ENCODE measurements at regions of chr4 and their contacts with region 1.

Region 1: DNA sequence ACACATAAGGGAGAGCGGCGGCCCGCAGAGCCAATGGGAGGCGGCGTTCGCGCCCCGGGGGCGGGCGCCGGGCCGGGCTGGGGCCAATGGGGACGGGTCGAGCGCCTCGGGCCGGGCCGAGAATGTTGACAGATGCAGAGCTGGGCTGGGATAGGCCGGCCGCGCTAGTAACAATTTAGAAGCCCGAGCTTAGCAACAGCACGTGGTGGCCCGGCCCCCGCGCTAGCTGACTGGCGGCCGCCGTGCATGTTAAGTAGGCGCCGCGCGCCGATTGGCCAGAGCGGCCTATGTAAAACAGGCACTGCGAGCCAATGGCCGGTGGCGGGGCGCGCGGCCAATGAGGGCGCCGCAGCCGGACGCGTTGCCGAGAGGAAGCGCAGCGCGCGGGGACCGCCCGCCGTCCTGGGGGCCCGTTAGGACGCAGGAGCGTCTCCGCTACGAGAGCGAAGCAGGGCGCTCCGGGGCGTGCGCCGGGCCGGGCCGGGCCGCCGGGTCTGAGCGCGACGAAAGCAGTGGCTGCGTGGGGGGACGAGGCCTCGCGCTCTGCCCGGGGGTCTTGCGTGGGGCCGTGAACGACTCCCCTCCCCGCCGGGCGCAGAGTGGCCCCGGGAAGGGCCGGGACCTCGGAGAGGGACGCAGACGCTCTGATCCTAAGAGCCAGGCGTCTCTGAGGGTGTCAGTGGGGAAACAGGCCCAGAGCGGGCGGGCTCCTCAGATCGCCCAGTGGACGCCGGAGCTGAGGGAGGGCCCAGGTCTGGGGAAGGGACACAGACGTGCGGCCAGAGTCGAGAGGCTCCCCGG is 434 bp upstream of the MXD4 start:
- DNase-seq: peak; percentile 95 to 99 (median 98)
- ATAC-seq: peak; percentile 93
- H3K4me3 ChIP-seq: peak overlapping the region; percentile 69
- H3K4me3 Mint-ChIP-seq: peak overlapping the region; percentile 61 to 85 (median 76)
- H3K27ac ChIP-seq: peak overlapping the region; percentile 95
- H3K27ac Mint-ChIP-seq: peak overlapping the region; percentile 61 to 87 (median 83)
- H3K4me1 ChIP-seq: peaks cover 8 to 23% of the 10 kb centered on the region in 2 donors
- H3K4me1 Mint-ChIP-seq: peaks cover 0 to 11% (median 0%) of the 10 kb centered on the region in 7 donors
- H3K27me3 ChIP-seq: no peaks in the 10 kb centered on the region
- H3K27me3 Mint-ChIP-seq: no peaks in the 10 kb centered on the region

Region 2: DNA sequence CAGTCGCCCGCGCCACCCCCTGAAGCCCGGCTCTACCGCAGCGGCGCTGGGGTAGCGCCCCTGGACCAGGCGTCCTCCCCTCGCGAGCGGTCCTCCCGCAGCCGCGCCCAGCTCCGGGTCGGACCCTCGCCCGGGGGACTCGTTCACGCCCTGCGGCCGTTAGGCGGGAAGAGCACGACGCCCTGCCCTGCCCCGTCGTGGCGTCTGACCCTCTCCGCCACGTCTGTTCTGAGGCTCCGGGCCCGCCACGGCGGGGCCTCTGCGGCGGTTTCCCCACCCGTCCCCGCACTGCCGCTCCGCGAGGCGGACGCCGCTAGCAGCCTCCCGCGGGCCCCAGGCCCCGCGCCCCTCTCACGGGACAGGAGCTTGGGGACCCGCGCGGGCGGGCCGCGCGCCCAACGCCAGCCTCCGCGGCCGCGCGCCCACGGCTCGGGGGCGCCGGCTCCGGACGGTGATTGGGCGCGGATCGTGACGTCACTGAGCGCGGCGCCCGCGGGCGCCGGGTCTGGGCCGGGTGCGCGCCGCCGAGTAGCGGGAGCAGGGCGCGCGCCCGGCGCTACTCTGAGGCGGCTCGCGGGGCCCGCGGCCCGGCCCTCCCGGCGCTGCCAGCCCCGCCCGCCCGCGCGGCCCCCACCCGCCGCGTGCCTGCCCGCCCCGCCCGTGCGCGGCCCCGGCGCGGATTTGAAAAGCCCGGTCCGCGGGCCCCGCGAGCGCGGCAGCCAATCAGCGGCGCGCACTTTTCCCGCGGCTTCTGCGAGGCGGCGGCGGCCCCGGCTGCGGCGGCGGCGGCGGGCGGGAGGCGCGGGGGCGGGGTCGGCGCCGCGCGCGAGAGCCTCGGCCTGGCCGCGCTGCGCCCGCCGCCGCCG is 391.5 kb before region 1 on chr4 and contains the start of gene NSD2:
- CTCF ChIA-PET with region 1: no interaction called
- POLR2A ChIA-PET with region 1: no interaction called
- intact Hi-C with region 1: loop called (anchors 1 to 5 kb)
- DNase-seq: peak; percentile 79 to 95 (median 86)
- ATAC-seq: peak; percentile 86
- H3K4me3 ChIP-seq: peak within 1 kb of the TSS; percentile 86
- H3K4me3 Mint-ChIP-seq: peak within 1 kb of the TSS; percentile 84 to 98 (median 89)
- H3K27ac ChIP-seq: peak within 1 kb of the TSS; percentile 99
- H3K27ac Mint-ChIP-seq: peak within 1 kb of the TSS; percentile 91 to 96 (median 95)
- H3K4me1 ChIP-seq: peaks cover 15 to 20% of the 10 kb centered on the region in 2 donors
- H3K4me1 Mint-ChIP-seq: peaks cover 12 to 37% (median 34%) of the 10 kb centered on the region in 7 donors
- H3K27me3 ChIP-seq: no peaks in the 10 kb centered on the region
- H3K27me3 Mint-ChIP-seq: peaks cover 0 to 4% (median 0%) of the 10 kb centered on the region in 5 donors
- total RNA-seq, gene NSD2: 35.4 to 207 (median 38.5) TPM

Region 3: GRCh38 chr4:2281575-2282343 is 19.4 kb after region 1 on chr4:
- CTCF ChIA-PET with region 1: interaction called, 3 read pairs
- POLR2A ChIA-PET with region 1: interaction called, 37 read pairs
- intact Hi-C with region 1: loop called (anchors 1 kb)
- DNase-seq: peak; percentile 51 to 96 (median 94)
- ATAC-seq: peak; percentile 95
- H3K4me3 ChIP-seq: peak overlapping the region; percentile 33
- H3K4me3 Mint-ChIP-seq: peak overlapping the region; percentile 73 to 90 (median 84)
- H3K27ac ChIP-seq: peak overlapping the region; percentile 81
- H3K27ac Mint-ChIP-seq: peak overlapping the region; percentile 91 to 100 (median 99)
- H3K4me1 ChIP-seq: peaks cover 31 to 34% of the 10 kb centered on the region in 2 donors
- H3K4me1 Mint-ChIP-seq: peaks cover 27 to 64% (median 50%) of the 10 kb centered on the region in 7 donors
- H3K27me3 ChIP-seq: no peaks in the 10 kb centered on the region
- H3K27me3 Mint-ChIP-seq: no peaks in the 10 kb centered on the region

Region 4: DNA sequence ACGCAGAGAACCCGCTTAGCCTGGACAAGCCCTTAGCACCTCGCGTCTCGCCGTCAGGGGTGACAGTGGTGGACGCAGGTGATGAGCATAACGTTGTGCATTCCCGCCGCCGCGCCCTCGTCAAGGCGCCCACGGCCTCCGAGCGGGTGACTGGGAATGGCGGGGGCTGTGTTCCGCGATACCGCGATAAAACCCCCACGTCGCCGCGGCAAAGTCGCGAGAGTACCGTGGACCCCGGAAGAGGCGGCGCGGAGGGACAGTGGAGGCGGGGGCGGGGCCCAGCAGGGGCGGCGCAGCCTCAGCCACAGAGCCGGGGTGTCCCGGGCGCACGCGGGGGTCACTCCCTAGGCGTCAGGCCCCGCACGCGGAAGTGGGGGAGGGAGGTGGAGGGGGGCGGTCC is 102.3 kb after region 1 on chr4:
- CTCF ChIA-PET with region 1: no interaction called
- POLR2A ChIA-PET with region 1: interaction called, 3 read pairs
- intact Hi-C with region 1: loop called in 1 of 2 experiments (anchors 1 kb)
- DNase-seq: peak; percentile 49 to 74 (median 61)
- ATAC-seq: peak; percentile 89
- H3K4me3 ChIP-seq: peak overlapping the region; percentile 79
- H3K4me3 Mint-ChIP-seq: peak overlapping the region; percentile 37 to 88 (median 78)
- H3K27ac ChIP-seq: peak overlapping the region; percentile 81
- H3K27ac Mint-ChIP-seq: peak overlapping the region in 8 of 9 donors; percentile 53 to 93 (median 81)
- H3K4me1 ChIP-seq: peaks cover 9 to 12% of the 10 kb centered on the region in 2 donors
- H3K4me1 Mint-ChIP-seq: peaks cover 0 to 31% (median 9%) of the 10 kb centered on the region in 7 donors
- H3K27me3 ChIP-seq: no peaks in the 10 kb centered on the region
- H3K27me3 Mint-ChIP-seq: no peaks in the 10 kb centered on the region

Region 5: DNA sequence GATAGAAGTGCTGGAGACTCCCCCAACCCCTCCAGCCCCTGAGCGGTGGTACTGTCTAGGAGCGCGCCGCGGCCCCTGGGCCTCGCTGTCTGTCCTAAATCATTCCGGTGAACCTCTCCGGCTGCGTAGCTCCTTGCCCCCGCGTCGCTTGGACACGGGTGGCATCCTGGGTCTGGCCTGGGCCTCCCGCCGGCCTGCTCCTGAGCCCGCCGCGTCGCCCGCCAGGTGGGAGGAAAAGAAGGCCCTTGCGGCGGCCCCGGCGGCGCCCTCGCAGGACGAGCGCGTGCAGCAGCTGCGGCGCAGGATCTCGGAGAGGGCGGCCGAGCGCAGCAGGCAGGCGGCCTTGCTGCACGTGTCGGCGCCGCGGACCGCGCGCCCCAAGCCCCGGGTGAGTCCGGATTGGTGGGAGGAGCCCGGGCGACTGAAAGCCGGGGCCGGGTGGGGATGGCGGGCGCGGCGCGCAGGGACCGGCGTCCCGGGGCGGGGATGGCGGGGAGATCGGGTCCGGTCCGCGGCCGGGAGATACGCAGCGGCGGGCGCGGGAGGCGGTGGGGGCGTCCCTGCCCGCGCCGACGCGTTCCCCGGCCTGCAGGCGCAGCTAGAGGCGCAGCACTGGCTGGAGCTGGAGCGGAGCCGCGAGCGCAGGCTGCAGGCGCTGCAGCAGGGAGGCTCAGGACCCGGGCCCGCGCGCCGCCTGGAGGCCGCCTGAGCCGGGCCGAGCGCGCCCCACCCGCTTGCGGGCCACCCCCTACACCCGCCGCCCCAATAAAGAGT is 200.1 kb after region 1 on chr4:
- CTCF ChIA-PET with region 1: no interaction called
- POLR2A ChIA-PET with region 1: no interaction called
- intact Hi-C with region 1: loop called in 1 of 2 experiments (anchors 1 kb)
- DNase-seq: peak; percentile 42 to 76 (median 66)
- ATAC-seq: peak; percentile 97
- H3K4me3 ChIP-seq: peak overlapping the region; percentile 44
- H3K4me3 Mint-ChIP-seq: peak overlapping the region; percentile 65 to 87 (median 81)
- H3K27ac ChIP-seq: peak overlapping the region; percentile 41
- H3K27ac Mint-ChIP-seq: peak overlapping the region in 2 of 9 donors; percentile 14 to 45
- H3K4me1 ChIP-seq: peaks cover 0 to 5% of the 10 kb centered on the region in 2 donors
- H3K4me1 Mint-ChIP-seq: peaks cover 6 to 21% (median 16%) of the 10 kb centered on the region in 7 donors
- H3K27me3 ChIP-seq: no peaks in the 10 kb centered on the region
- H3K27me3 Mint-ChIP-seq: peaks cover 0 to 38% (median 7%) of the 10 kb centered on the region in 5 donors